ENCODE measurements at regions of chr13 and their contacts with region 1.

Region 1: GRCh38 chr13:35164324-35164932 is 222.4 kb downstream of the NBEA start:
- DNase-seq: no peak
- H3K4me3 ChIP-seq: no peak overlapping the region
- H3K27ac ChIP-seq: no peak overlapping the region
- H3K4me1 ChIP-seq: no peaks in the 10 kb centered on the region
- H3K27me3 ChIP-seq: no peaks in the 10 kb centered on the region
- CTCF ChIP-seq: peak; percentile 12 to 73 (median 34)
- POLR2A ChIP-seq: no peak

Region 2: GRCh38 chr13:33931397-33932311 is 1232.8 kb before region 1 on chr13:
- intact Hi-C with region 1: loop called (anchors 10 kb)
- DNase-seq: no peak
- H3K4me3 ChIP-seq: no peak overlapping the region
- H3K27ac ChIP-seq: no peak overlapping the region
- H3K4me1 ChIP-seq: no peaks in the 10 kb centered on the region
- H3K27me3 ChIP-seq: no peaks in the 10 kb centered on the region
- CTCF ChIP-seq: peak in 2 of 3 donors; percentile 49 to 55
- POLR2A ChIP-seq: no peak